ENCODE measurements at regions of chr14 and their contacts with region 1.

Region 1: GRCh38 chr14:49892636-49893308 is at the start of gene ARF6:
- DNase-seq: peak; percentile 92 to 99
- H3K4me3 ChIP-seq: peak within 1 kb of the TSS; percentile 85 to 95
- H3K27ac ChIP-seq: peak within 1 kb of the TSS; percentile 100
- H3K4me1 ChIP-seq: peaks cover 0 to 30% of the 10 kb centered on the region in 2 donors
- H3K27me3 ChIP-seq: no peaks in the 10 kb centered on the region
- CTCF ChIP-seq: no peak
- total RNA-seq, gene ARF6: 31.5 TPM

Region 2: GRCh38 chr14:49867831-49868723 is 24.7 kb before region 1 on chr14:
- intact Hi-C with region 1: loop called (anchors 1 kb)
- DNase-seq: peak; percentile 89 to 98
- H3K4me3 ChIP-seq: peak overlapping the region; percentile 64 to 66
- H3K27ac ChIP-seq: peak overlapping the region; percentile 89 to 90
- H3K4me1 ChIP-seq: peaks cover 3 to 8% of the 10 kb centered on the region in 2 donors
- H3K27me3 ChIP-seq: no peaks in the 10 kb centered on the region
- CTCF ChIP-seq: no peak

Region 3: GRCh38 chr14:49975276-49975675 is 82.5 kb after region 1 on chr14:
- intact Hi-C with region 1: loop called (anchors 2 kb)
- DNase-seq: no peak
- H3K4me3 ChIP-seq: no peak overlapping the region
- H3K27ac ChIP-seq: peak overlapping the region; percentile 84 to 85
- H3K4me1 ChIP-seq: peaks cover 14 to 48% of the 10 kb centered on the region in 2 donors
- H3K27me3 ChIP-seq: no peaks in the 10 kb centered on the region
- CTCF ChIP-seq: no peak

Region 4: GRCh38 chr14:50003213-50004031 is 110.7 kb after region 1 on chr14:
- intact Hi-C with region 1: loop called (anchors 1 kb)
- DNase-seq: peak; percentile 33 to 90
- H3K4me3 ChIP-seq: peak overlapping the region; percentile 62 to 69
- H3K27ac ChIP-seq: peak overlapping the region; percentile 96 to 97
- H3K4me1 ChIP-seq: peaks cover 14 to 48% of the 10 kb centered on the region in 2 donors
- H3K27me3 ChIP-seq: no peaks in the 10 kb centered on the region
- CTCF ChIP-seq: peak in 1 of 3 experiments; percentile 34

Region 5: DNA sequence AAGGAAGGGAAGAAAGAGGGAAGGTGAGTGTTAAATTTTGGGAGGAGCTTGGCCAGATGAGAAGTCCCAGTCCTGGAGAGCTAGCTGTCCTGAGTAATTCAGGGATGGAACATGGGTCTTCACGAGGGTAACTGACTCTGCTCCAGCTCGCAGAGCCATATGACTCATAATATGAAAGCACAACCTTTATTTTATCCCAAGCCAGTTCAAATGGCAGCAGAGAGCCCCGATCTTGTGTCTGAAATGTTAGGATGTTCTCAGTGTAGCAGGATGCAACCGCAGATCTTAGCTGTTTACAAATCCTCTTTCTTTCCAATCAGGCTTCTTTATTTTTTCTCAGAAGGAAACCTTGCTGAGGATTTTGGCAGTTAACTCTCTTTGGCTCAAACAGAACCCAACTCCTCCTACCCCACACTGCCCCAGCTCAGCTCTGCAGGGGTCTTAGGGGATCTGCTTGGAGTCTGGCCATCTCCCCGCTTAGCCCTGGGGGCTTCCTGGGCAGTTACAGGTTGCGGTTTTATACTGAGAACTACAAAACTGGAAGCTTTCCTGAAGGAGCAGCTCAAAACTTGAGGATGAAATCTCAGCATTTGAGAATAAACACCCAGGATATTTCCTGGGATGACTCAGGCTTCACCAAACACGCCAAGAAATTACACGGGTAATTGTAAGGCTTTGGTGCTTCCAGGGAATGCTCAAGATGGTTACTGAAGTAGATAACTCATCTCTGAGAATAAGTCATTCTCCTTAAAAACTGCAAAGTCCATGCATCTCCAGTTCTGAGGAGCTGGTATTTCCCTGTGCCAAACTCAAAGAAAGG is 131.1 kb after region 1 on chr14:
- intact Hi-C with region 1: loop called (anchors 2 kb)
- DNase-seq: peak in 1 of 2 donors; percentile 74
- H3K4me3 ChIP-seq: peak overlapping the region in 1 of 2 donors; percentile 9
- H3K27ac ChIP-seq: peak overlapping the region; percentile 70 to 78
- H3K4me1 ChIP-seq: peaks cover 7 to 35% of the 10 kb centered on the region in 2 donors
- H3K27me3 ChIP-seq: no peaks in the 10 kb centered on the region
- CTCF ChIP-seq: no peak

Region 6: DNA sequence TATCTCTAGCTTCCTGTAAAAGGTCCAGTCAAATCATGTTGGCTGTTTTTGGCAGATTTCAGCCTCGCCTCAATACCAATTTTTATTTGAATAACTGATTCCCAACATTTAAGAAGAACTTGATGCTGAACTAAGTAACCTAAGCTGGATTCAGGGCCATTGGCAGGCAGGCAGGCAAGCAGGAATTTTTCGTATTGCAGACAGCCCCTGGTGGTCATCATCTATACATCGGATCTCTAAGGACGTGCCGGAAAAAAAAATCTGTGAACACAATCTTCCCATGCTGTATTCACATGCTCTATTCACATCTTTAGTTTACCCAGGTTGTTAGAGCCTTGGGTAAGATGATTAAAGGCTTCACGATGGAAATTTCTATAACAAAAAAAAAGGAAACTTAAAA is 216.6 kb after region 1 on chr14:
- intact Hi-C with region 1: loop called (anchors 2 kb)
- DNase-seq: no peak
- H3K4me3 ChIP-seq: no peak overlapping the region
- H3K27ac ChIP-seq: no peak overlapping the region
- H3K4me1 ChIP-seq: no peaks in the 10 kb centered on the region
- H3K27me3 ChIP-seq: no peaks in the 10 kb centered on the region
- CTCF ChIP-seq: no peak